PC-3 (cell line): ENCODE measurements at regions of chr3 and their contacts with region 1.

Region 1: GRCh38 chr3:99286266-99286845 is 352.0 kb upstream of the COL8A1 start:
- DNase-seq: no peak
- ATAC-seq: no peak
- H3K4me3 ChIP-seq: no peak overlapping the region
- H3K27ac ChIP-seq: no peak overlapping the region
- H3K4me1 ChIP-seq: no peaks in the 10 kb centered on the region
- H3K27me3 ChIP-seq: no peaks in the 10 kb centered on the region
- CTCF ChIP-seq: no peak

Region 2: DNA sequence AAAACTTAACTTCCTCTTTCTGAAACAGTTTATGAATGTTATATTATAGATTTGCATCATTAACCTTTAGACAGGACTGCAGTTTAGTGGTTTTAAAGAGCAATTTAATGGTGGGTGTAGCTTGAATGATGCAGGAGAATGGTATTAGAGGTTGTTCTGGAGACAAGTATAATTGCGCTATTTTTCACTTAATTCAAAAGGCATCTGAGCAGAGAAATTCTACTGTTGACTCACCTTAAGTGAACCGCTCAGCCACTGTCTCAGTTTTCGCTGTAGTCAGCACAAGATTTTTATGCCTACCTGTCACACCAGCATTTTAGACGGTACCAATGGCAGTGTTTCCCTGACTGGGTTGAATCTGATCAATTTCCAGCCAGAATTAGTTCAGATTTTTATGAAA is 36.1 kb before region 1 on chr3:
- CTCF ChIA-PET with region 1: no interaction called
- POLR2A ChIA-PET with region 1: no interaction called
- intact Hi-C with region 1: no loop called
- DNase-seq: peak; percentile 75
- ATAC-seq: peak; percentile 68
- H3K4me3 ChIP-seq: no peak overlapping the region
- H3K27ac ChIP-seq: no peak overlapping the region
- H3K4me1 ChIP-seq: peaks cover 54% of the 10 kb centered on the region
- H3K27me3 ChIP-seq: no peaks in the 10 kb centered on the region
- CTCF ChIP-seq: no peak

Region 3: DNA sequence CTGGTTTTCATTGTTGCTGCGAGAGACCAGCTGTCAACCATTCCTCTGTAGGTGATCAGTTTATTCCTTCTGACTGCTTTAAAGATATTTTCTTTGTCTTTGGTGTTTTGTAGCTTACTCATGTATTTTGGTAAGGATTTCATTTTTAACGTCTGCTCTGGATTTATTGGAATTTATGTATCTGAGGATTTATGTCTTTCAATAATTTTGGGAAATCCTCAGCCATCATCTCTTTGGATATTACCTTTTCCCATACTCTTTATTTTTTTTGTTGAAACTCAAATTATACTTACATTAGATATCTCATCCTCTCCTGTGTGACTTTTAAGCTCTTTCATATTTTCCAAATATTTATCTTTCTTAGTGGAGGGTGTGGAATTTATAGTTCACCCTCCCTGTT is 289.3 kb after region 1 on chr3:
- CTCF ChIA-PET with region 1: no interaction called
- POLR2A ChIA-PET with region 1: interaction called, 13 read pairs
- intact Hi-C with region 1: no loop called
- DNase-seq: no peak
- ATAC-seq: no peak
- H3K4me3 ChIP-seq: no peak overlapping the region
- H3K27ac ChIP-seq: no peak overlapping the region
- H3K4me1 ChIP-seq: no peaks in the 10 kb centered on the region
- H3K27me3 ChIP-seq: no peaks in the 10 kb centered on the region
- CTCF ChIP-seq: no peak